ENCODE measurements at regions of chr3 and their contacts with region 1.

Region 1: DNA sequence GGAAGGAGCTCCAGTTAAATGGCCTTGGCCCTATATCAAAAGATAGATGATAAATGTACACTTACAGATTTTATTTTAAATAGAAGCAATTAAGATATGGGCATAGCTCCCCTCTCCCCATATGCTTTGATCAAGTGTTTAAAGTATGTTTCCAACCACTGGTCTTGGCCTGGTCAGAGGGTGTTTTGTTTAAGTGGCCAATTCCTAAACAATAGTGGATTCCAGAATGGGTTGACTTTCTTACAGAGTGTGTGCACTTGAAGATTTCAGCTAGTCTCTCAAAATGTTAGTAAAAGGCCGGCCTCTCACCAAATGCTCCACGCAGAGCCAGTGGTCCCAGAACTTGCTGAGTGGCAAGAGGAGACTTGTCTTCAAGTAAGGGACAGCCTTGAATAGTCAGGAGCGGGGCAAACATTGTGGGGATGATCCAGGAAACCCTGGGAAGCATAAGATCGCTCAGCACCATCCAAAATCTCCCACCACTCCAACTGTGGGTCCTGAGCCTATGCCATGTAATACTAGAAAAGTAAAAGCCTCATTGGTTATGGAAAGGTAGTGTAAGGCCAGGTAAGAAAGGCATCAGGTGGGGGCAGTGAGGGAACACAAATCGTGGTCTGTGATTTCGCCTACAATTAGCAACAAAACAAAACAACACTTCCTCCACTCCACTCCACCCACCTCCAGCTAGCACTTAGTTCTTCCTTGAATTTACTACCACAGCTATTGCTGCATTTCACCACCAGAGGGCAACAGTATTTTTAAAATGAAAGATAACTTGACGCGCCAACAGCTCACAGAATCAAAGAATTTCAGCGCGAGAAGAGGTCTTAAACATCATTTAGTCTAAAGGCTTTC is 4.8 kb downstream of the RARRES1 start:
- DNase-seq: peak; percentile 74
- ATAC-seq: peak; percentile 62
- H3K4me3 ChIP-seq: peak overlapping the region in 1 of 5 experiments; percentile 56
- H3K4me3 Mint-ChIP-seq: peak overlapping the region; percentile 25
- H3K27ac ChIP-seq: no peak overlapping the region
- H3K27ac Mint-ChIP-seq: no peak overlapping the region
- H3K4me1 ChIP-seq: peaks cover 20 to 27% of the 10 kb centered on the region in 2 donors
- H3K4me1 Mint-ChIP-seq: peaks cover 23% of the 10 kb centered on the region
- H3K27me3 ChIP-seq: peaks cover 0 to 9% (median 3%) of the 10 kb centered on the region in 4 experiments
- H3K27me3 Mint-ChIP-seq: peaks cover 5% of the 10 kb centered on the region
- CTCF ChIP-seq: peak; percentile 86

Region 2: GRCh38 chr3:158313338-158313927 is 414.0 kb before region 1 on chr3:
- CTCF ChIA-PET with region 1: no interaction called
- POLR2A ChIA-PET with region 1: no interaction called
- intact Hi-C with region 1: no loop called
- DNase-seq: peak; percentile 15
- ATAC-seq: no peak
- H3K4me3 ChIP-seq: no peak overlapping the region
- H3K4me3 Mint-ChIP-seq: no peak overlapping the region
- H3K27ac ChIP-seq: no peak overlapping the region
- H3K27ac Mint-ChIP-seq: no peak overlapping the region
- H3K4me1 ChIP-seq: no peaks in the 10 kb centered on the region
- H3K4me1 Mint-ChIP-seq: no peaks in the 10 kb centered on the region
- H3K27me3 ChIP-seq: no peaks in the 10 kb centered on the region
- H3K27me3 Mint-ChIP-seq: no peaks in the 10 kb centered on the region
- CTCF ChIP-seq: peak; percentile 49

Region 3: DNA sequence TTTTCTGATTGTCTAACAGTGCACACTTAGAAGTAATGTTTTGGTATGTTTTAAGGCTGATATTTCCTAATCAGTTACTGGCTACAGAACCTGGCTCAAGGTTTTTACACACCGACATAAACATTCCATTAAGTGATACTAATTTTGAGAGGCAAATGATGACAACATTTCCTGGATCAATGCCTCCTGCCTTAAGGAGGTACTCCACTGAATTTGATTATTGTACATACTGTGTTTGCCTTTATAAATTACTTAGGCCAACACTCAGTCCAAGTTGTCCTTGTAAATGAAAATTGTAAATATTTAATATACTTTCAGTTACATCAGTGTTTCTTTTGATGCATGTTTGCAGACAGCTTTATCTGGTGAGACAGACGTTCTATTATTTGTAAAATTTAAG is 30.8 kb before region 1 on chr3:
- CTCF ChIA-PET with region 1: interaction called, 11 read pairs
- POLR2A ChIA-PET with region 1: no interaction called
- intact Hi-C with region 1: no loop called
- DNase-seq: no peak
- ATAC-seq: no peak
- H3K4me3 ChIP-seq: no peak overlapping the region
- H3K4me3 Mint-ChIP-seq: no peak overlapping the region
- H3K27ac ChIP-seq: no peak overlapping the region
- H3K27ac Mint-ChIP-seq: no peak overlapping the region
- H3K4me1 ChIP-seq: no peaks in the 10 kb centered on the region
- H3K4me1 Mint-ChIP-seq: no peaks in the 10 kb centered on the region
- H3K27me3 ChIP-seq: no peaks in the 10 kb centered on the region
- H3K27me3 Mint-ChIP-seq: no peaks in the 10 kb centered on the region
- CTCF ChIP-seq: no peak

Region 4: GRCh38 chr3:158713094-158713499 is 14.3 kb before region 1 on chr3:
- CTCF ChIA-PET with region 1: interaction called, 51 read pairs
- POLR2A ChIA-PET with region 1: no interaction called
- intact Hi-C with region 1: no loop called
- DNase-seq: no peak
- ATAC-seq: no peak
- H3K4me3 ChIP-seq: no peak overlapping the region
- H3K4me3 Mint-ChIP-seq: no peak overlapping the region
- H3K27ac ChIP-seq: no peak overlapping the region
- H3K27ac Mint-ChIP-seq: no peak overlapping the region
- H3K4me1 ChIP-seq: no peaks in the 10 kb centered on the region
- H3K4me1 Mint-ChIP-seq: peaks cover 5% of the 10 kb centered on the region
- H3K27me3 ChIP-seq: no peaks in the 10 kb centered on the region
- H3K27me3 Mint-ChIP-seq: no peaks in the 10 kb centered on the region
- CTCF ChIP-seq: no peak

Region 5: DNA sequence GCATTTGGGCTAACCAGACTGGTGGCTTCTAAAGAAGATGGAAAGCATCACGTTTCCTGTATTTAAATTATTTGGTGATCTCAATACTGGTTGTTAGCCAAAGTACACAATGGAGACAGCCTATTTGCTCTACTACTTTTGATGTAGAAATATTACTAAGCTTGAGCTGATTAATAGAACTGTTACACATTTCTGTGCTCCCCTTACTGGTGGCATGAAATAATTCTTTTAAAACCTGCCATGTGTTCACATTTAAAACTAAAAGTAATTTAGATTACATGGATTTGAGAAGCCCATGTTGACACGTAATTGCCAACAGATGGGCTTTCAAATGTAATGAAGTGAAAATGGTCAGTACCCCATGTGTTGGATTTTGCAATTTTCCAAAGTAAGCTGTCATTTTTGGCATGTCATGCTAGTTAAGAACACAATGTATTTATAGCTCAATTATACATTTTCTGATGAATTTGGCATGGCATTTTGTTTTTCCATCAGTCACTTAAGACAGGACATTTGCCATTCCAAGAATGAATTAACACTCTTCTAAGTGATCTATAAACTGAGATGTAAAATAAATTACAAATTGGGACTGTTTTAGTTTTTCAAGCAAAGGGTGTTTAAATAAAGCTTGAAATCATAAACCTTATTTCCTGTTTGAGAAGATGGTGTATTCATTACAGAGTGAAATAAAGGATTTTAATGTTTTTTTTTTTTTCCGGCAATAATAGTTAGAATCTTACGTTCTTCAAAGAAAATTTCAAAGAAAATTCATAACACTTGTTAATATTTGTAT is 15.6 kb after region 1 on chr3:
- CTCF ChIA-PET with region 1: interaction called, 24 read pairs
- POLR2A ChIA-PET with region 1: no interaction called
- intact Hi-C with region 1: no loop called
- DNase-seq: no peak
- ATAC-seq: no peak
- H3K4me3 ChIP-seq: no peak overlapping the region
- H3K4me3 Mint-ChIP-seq: no peak overlapping the region
- H3K27ac ChIP-seq: no peak overlapping the region
- H3K27ac Mint-ChIP-seq: no peak overlapping the region
- H3K4me1 ChIP-seq: no peaks in the 10 kb centered on the region
- H3K4me1 Mint-ChIP-seq: peaks cover 6% of the 10 kb centered on the region
- H3K27me3 ChIP-seq: no peaks in the 10 kb centered on the region
- H3K27me3 Mint-ChIP-seq: no peaks in the 10 kb centered on the region
- CTCF ChIP-seq: no peak